AG04450 (cell line): ENCODE measurements at regions of chr14 and their contacts with region 1.

Region 1: GRCh38 chr14:95442633-95443021 is 73.8 kb downstream of the SYNE3 start:
- DNase-seq: peak; percentile 57
- H3K4me3 ChIP-seq: no peak overlapping the region
- H3K27ac ChIP-seq: no peak overlapping the region
- H3K27me3 ChIP-seq: no peaks in the 10 kb centered on the region
- CTCF ChIP-seq: peak; percentile 95

Region 2: DNA sequence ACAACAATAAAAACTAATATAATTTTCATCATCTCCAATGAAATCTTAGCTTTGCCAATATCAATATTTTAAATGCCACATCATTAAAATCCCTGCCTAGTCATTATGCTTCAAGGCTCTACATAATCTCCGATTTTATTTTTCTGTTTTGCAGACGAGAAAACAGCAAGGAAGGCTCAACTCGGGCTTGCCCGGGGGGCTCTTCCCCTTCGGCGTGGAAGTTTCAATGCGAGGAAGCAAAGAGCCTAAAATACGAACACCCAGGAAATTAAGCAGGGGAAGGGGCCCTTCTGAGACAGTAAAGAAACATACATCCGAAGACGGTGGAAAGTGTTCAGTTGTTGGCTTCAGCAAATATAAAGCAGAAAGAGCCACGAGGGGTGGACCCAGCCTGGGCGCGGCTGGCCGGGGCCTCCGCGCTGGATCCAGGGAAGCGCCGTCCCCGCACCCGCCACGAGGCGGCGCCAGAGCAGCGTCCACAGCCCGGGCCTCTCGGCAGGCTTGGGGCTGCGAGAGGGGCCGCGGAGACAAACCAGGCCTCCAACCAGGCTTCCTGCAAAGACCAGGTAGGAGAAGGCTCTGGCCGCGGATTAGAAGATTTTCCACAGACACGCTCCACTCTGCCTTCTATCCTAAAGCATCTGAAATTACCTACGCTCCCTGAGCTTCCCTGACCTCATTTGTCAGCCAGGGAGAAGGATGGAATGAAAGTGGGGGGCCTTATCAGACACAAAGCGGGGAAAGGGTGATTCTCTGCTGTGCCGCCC is 753.2 kb before region 1 on chr14:
- CTCF ChIA-PET with region 1: interaction called, 13 read pairs
- POLR2A ChIA-PET with region 1: no interaction called
- DNase-seq: no peak
- H3K4me3 ChIP-seq: no peak overlapping the region; the same call in 1 of the 2 replicates
- H3K27ac ChIP-seq: no peak overlapping the region
- H3K27me3 ChIP-seq: no peaks in the 10 kb centered on the region
- CTCF ChIP-seq: peak; percentile 95

Region 3: DNA sequence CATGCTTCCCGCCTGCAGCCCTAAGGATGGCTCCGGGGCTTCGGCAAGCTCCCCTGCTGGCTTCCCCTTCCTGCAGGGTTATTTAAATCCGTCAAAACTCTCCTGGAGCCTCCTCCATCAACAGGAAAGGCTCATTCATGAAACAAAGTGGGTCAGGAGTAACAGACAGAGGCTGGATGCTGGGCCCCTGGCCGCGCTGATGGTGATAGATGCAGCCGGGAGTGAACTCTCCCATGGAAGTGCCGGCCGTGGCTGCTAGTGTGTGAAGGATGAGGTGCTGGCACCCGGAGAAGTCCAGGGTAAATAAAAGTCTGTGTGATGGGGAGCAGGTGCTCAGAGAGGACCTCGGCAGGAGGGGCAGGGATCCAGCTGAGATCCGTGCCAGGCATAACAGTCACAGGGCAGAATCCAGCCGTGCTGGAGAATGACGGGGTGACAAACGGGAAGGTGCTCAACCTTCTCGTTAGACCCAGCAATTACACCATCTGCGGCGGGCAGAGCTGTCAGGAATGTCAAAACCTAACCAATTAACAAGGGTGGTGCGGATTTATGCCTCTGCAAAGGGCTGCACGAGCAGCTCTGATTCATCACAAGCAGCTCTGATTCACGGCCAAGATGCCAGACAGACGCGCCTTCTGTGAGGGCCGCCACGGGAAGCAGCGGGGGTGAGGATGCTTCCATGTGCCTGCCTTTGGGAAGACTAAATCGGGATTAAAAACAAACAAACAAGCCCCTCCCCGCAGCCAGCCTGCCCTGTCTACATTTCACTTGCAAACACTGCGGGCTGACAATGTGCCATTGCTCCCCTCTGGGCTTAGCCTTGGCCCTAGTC is 18.2 kb after region 1 on chr14:
- CTCF ChIA-PET with region 1: interaction called, 24 read pairs
- POLR2A ChIA-PET with region 1: no interaction called
- DNase-seq: peak; percentile 55
- H3K4me3 ChIP-seq: no peak overlapping the region
- H3K27ac ChIP-seq: no peak overlapping the region
- H3K27me3 ChIP-seq: no peaks in the 10 kb centered on the region
- CTCF ChIP-seq: no peak

Region 4: GRCh38 chr14:95495538-95496025 is 53.0 kb after region 1 on chr14:
- CTCF ChIA-PET with region 1: interaction called, 12 read pairs
- POLR2A ChIA-PET with region 1: no interaction called
- DNase-seq: no peak
- H3K4me3 ChIP-seq: no peak overlapping the region
- H3K27ac ChIP-seq: no peak overlapping the region
- H3K27me3 ChIP-seq: no peaks in the 10 kb centered on the region
- CTCF ChIP-seq: no peak

Region 5: DNA sequence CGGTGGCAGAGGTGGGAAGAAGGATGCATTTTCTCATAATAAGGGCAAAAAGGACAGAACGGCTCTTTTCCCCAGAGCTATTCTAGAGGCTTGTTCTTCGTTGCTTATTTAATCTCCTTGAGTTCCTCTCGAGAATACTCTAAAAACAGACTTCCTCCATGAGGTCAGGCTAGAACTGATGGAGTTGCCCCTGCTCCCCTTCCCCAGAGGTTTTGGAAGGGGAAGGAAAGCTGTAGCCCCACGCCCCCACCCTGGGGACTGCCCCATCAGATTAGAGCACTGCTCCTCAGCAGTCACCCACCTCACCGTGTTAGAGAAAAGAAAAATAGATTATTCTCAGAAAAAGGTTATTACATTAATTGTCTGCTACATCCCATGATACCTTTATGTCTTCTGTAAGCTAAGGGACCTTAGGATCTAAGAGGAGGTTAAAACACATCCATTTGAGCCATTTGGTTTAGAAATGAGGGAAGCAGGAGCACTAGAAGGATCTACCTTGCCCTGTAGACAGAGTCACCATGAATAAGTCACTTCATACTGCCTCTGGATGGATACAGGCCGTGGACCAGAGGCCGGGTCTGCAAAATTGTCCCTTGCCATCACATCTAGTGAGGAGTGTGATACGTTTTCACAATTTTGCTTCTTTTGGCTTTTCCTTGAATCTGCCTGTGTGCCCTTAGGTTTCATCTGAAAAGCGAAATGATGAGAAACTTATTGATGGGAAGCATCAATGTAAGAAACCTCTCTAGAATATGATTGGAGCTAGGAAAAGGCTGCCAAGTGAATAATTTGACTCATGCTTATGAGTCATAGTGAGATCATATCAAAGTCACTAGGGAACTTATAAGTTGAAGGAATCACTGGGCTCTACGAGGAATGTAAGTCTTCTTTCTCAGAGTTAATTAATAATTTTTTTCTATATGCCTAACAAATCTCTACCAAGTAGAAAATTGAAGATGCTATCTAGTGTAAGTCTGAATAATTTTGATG is 102.8 kb after region 1 on chr14:
- CTCF ChIA-PET with region 1: interaction called, 14 read pairs
- POLR2A ChIA-PET with region 1: no interaction called
- DNase-seq: peak; percentile 71
- H3K4me3 ChIP-seq: no peak overlapping the region
- H3K27ac ChIP-seq: peak overlapping the region; percentile 69
- H3K27me3 ChIP-seq: no peaks in the 10 kb centered on the region
- CTCF ChIP-seq: no peak

Region 6: DNA sequence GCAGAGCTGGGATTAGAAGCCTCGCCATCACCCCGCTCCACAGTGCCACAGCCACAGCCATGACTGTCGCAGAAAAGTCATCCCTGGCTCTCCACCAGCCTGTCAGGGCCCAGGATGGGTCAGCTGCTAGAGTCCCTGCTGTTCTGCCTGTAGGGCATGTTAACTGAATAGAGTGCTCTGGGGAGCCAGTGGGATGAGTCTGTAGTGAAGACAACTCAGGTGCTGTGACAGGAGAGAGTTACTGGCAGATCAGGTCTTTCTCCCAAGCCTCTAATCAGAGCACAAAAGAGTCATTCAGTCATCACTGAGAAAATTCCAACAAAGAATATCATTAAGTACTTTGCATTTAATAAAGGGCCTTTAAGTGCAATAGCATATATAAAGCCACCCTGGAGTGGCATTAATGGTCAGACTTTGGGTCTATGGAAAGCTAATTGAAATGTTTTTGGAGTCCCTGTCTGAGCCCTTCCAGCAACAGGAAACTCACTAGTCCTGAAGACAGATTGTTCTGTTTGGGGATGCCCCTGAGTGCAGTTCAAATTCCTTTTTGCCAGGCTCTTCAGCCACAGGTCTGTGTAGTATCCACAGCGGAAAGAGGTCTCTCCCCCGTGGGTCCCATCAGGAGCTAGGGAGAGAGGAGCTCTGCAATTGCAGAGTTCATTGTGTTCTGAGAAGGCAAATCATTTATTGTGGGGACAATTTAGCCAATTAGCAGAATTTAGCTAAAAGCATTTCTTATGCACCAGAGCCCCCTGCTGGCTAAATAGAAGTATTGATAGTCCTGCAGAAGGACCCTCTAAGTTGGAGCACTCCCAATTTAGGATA is 551.4 kb after region 1 on chr14:
- CTCF ChIA-PET with region 1: interaction called, 15 read pairs
- POLR2A ChIA-PET with region 1: no interaction called
- DNase-seq: peak; percentile 18
- H3K4me3 ChIP-seq: no peak overlapping the region
- H3K27ac ChIP-seq: no peak overlapping the region
- H3K27me3 ChIP-seq: peaks cover 16% of the 10 kb centered on the region
- CTCF ChIP-seq: peak; percentile 81

Region 7: GRCh38 chr14:96077983-96078658 is 635.5 kb after region 1 on chr14:
- CTCF ChIA-PET with region 1: no interaction called
- POLR2A ChIA-PET with region 1: no interaction called
- DNase-seq: no peak
- H3K4me3 ChIP-seq: no peak overlapping the region
- H3K27ac ChIP-seq: no peak overlapping the region
- H3K27me3 ChIP-seq: no peaks in the 10 kb centered on the region
- CTCF ChIP-seq: no peak